ENCODE measurements at regions of chr6 and their contacts with region 1.

Region 1: DNA sequence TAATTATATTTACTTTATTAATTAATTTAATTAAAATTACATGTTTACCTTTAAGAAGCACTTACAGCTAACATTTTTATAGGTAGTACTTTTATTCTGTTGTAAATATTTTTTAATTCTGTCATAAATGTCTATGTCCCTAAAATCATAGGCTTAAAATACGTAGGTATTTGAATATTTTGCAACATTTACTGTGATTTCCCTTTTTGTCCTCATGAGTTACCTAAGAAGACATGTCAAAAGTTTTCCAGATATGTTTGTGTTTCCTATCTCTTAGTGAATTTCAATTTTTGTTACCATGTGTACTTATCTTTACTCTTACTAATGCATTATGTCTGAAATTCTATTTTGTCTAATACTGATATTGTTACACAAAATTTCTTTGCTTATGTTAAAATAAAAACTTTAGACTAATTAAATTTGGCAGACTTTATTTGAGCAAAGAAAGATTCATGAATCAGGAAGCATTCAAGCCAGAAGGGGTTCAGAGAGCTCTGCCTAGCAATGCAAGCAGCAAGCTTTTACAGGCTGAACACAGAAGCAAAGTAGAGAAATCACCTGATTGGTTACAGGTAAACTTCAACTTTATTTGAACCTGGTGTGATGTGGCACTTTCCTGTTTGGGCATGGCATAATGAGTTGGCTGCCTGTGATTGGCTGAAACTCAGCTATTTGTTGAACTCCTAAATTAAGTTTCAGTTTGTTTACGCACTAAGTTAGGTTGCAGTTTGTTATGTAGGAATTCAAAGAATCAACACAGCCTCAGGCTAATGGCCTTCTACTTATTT is 123.2 kb upstream of the TMEM170B start:
- DNase-seq: peak; percentile 24
- H3K4me3 Mint-ChIP-seq: no peak overlapping the region
- H3K27ac Mint-ChIP-seq: no peak overlapping the region
- H3K4me1 Mint-ChIP-seq: peaks cover 62% of the 10 kb centered on the region
- H3K27me3 Mint-ChIP-seq: no peaks in the 10 kb centered on the region

Region 2: GRCh38 chr6:10521104-10521808 is 893.1 kb before region 1 on chr6 and contains the start of gene GCNT2:
- intact Hi-C with region 1: no loop called
- DNase-seq: no peak
- H3K4me3 Mint-ChIP-seq: no peak within 1 kb of the TSS
- H3K27ac Mint-ChIP-seq: no peak within 1 kb of the TSS
- H3K4me1 Mint-ChIP-seq: peaks cover 20% of the 10 kb centered on the region
- H3K27me3 Mint-ChIP-seq: no peaks in the 10 kb centered on the region
- total RNA-seq, gene GCNT2: 2.0 and 2.8 TPM in 2 replicates

Region 3: GRCh38 chr6:11232193-11232769 is 182.1 kb before region 1 on chr6 and contains the start of gene NEDD9:
- intact Hi-C with region 1: loop called (anchors 2 kb)
- DNase-seq: peak; percentile 94
- H3K4me3 Mint-ChIP-seq: peak within 1 kb of the TSS; percentile 93
- H3K27ac Mint-ChIP-seq: peak within 1 kb of the TSS; percentile 99
- H3K4me1 Mint-ChIP-seq: peaks cover 64% of the 10 kb centered on the region
- H3K27me3 Mint-ChIP-seq: no peaks in the 10 kb centered on the region
- total RNA-seq, gene NEDD9: 34.5 and 35.0 TPM in 2 replicates

Region 4: GRCh38 chr6:11343963-11344747 is 70.2 kb before region 1 on chr6:
- intact Hi-C with region 1: loop called (anchors 1 kb)
- DNase-seq: no peak
- H3K4me3 Mint-ChIP-seq: no peak overlapping the region
- H3K27ac Mint-ChIP-seq: peak overlapping the region; percentile 61
- H3K4me1 Mint-ChIP-seq: peaks cover 68% of the 10 kb centered on the region
- H3K27me3 Mint-ChIP-seq: no peaks in the 10 kb centered on the region

Region 5: GRCh38 chr6:11381801-11382513 is 32.4 kb before region 1 on chr6:
- intact Hi-C with region 1: loop called (anchors 2 kb)
- DNase-seq: peak; percentile 71
- H3K4me3 Mint-ChIP-seq: peak overlapping the region; percentile 85
- H3K27ac Mint-ChIP-seq: peak overlapping the region; percentile 92
- H3K4me1 Mint-ChIP-seq: peaks cover 59% of the 10 kb centered on the region
- H3K27me3 Mint-ChIP-seq: no peaks in the 10 kb centered on the region

Region 6: DNA sequence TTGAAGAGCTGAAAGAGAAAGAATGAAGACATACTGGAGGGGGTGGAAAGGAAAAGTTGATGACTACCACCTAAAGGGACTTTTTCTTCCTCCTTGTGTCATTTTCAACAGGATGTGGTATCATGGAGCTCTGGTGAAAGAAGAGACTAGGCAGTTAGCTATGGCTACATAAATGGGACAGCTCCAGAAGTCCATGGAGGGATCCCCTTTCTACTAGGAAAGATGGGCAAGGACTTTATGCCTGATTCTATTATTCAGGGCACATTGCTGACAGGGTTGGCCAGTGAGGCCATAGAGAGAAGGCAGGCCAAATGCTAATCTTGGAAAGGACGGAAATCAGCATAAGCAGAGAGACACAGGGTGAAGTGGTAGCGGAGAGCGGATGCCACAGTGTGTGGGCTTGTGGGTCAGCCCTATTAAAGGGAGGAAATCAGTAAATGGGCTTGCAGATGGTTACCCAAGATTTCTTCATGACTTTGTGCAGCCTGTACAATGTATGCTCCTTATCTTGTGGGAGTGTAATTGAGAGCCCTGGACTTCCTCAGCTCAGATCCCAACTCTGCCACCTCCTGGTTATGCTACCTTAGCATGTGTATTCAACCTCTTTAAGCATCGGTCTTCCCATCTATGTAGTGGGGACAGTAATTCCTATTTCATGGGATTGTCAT is 45.8 kb after region 1 on chr6:
- intact Hi-C with region 1: loop called (anchors 1 kb)
- DNase-seq: no peak
- H3K4me3 Mint-ChIP-seq: peak overlapping the region; percentile 67
- H3K27ac Mint-ChIP-seq: peak overlapping the region; percentile 91
- H3K4me1 Mint-ChIP-seq: peaks cover 29% of the 10 kb centered on the region
- H3K27me3 Mint-ChIP-seq: peaks cover 2% of the 10 kb centered on the region

Measured in activated T-helper 2 cell treated with anti-CD3 and anti-CD28 coated beads, Interferon-gamma antibody, Interleukin-2, Interleukin-4, amounts not matched to agents 10 μg/mL and 5 μg/mL and 100 μg/mL, durations not matched to agents 14 hours and 24 hours and 36 hours (primary cell).